Endothelial cell of umbilical vein (primary cell): ENCODE measurements at regions of chr4 and their contacts with region 1.

Region 1: GRCh38 chr4:87422104-87423052 is at the start of gene NUDT9:
- DNase-seq: peak; percentile 97
- H3K4me3 ChIP-seq: peak within 1 kb of the TSS; percentile 83 to 94 (median 90)
- H3K27ac ChIP-seq: peak within 1 kb of the TSS; percentile 68
- H3K4me1 ChIP-seq: peaks cover 11% of the 10 kb centered on the region
- H3K27me3 ChIP-seq: no peaks in the 10 kb centered on the region
- CTCF ChIP-seq: no peak
- POLR2A ChIP-seq: peak; percentile 79
- total RNA-seq, gene NUDT9: 25.0 and 26.0 TPM in 2 replicates

Region 2: GRCh38 chr4:86593688-86594558 is 828.5 kb before region 1 on chr4 and contains the start of gene PTPN13:
- CTCF ChIA-PET with region 1: no interaction called
- POLR2A ChIA-PET with region 1: no interaction called
- dilution Hi-C with region 1: no loop called
- intact Hi-C with region 1: loop called (anchors 10 kb)
- DNase-seq: peak; percentile 98
- H3K4me3 ChIP-seq: peak within 1 kb of the TSS; percentile 38 to 83 (median 70)
- H3K27ac ChIP-seq: no peak within 1 kb of the TSS
- H3K4me1 ChIP-seq: peaks cover 12% of the 10 kb centered on the region
- H3K27me3 ChIP-seq: no peaks in the 10 kb centered on the region
- CTCF ChIP-seq: no peak
- POLR2A ChIP-seq: peak; percentile 43
- total RNA-seq, gene PTPN13: 2.2 and 2.9 TPM in 2 replicates

Region 3: GRCh38 chr4:87390891-87391575 is 31.3 kb before region 1 on chr4 and contains the start of gene HSD17B11:
- CTCF ChIA-PET with region 1: interaction called, 11 read pairs
- POLR2A ChIA-PET with region 1: interaction called, 11 read pairs
- dilution Hi-C with region 1: no loop called
- intact Hi-C with region 1: loop called (anchors 1 kb)
- DNase-seq: peak; percentile 93
- H3K4me3 ChIP-seq: peak within 1 kb of the TSS; percentile 62 to 85 (median 65)
- H3K27ac ChIP-seq: peak within 1 kb of the TSS; percentile 47
- H3K4me1 ChIP-seq: peaks cover 9% of the 10 kb centered on the region
- H3K27me3 ChIP-seq: no peaks in the 10 kb centered on the region
- CTCF ChIP-seq: no peak
- POLR2A ChIP-seq: peak; percentile 85
- total RNA-seq, gene HSD17B11: 16.0 and 21.1 TPM in 2 replicates

Region 4: DNA sequence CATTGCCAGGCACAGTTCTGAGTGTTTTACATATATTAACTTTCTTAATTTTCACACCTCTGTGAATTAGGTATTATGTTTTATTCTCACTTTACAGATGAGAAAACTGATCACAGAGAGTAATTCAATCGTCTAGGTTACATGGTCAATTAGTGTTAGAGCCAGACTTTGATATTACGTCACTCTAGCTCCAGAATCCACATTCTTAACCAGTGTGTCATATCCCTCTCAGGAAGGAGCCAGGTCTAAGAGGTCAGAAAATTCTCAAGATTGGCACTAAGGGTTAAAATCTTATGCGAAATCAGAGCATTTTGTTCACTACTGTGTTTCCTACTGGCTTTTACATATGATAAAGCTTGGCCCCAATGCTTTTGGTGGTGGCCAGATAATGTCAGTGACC is 235.1 kb after region 1 on chr4:
- CTCF ChIA-PET with region 1: no interaction called
- POLR2A ChIA-PET with region 1: no interaction called
- dilution Hi-C with region 1: no loop called
- intact Hi-C with region 1: loop called (anchors 5 kb)
- DNase-seq: peak; percentile 91
- H3K4me3 ChIP-seq: no peak overlapping the region
- H3K27ac ChIP-seq: peak overlapping the region; percentile 93
- H3K4me1 ChIP-seq: peaks cover 32% of the 10 kb centered on the region
- H3K27me3 ChIP-seq: no peaks in the 10 kb centered on the region
- CTCF ChIP-seq: no peak
- POLR2A ChIP-seq: no peak

Region 5: DNA sequence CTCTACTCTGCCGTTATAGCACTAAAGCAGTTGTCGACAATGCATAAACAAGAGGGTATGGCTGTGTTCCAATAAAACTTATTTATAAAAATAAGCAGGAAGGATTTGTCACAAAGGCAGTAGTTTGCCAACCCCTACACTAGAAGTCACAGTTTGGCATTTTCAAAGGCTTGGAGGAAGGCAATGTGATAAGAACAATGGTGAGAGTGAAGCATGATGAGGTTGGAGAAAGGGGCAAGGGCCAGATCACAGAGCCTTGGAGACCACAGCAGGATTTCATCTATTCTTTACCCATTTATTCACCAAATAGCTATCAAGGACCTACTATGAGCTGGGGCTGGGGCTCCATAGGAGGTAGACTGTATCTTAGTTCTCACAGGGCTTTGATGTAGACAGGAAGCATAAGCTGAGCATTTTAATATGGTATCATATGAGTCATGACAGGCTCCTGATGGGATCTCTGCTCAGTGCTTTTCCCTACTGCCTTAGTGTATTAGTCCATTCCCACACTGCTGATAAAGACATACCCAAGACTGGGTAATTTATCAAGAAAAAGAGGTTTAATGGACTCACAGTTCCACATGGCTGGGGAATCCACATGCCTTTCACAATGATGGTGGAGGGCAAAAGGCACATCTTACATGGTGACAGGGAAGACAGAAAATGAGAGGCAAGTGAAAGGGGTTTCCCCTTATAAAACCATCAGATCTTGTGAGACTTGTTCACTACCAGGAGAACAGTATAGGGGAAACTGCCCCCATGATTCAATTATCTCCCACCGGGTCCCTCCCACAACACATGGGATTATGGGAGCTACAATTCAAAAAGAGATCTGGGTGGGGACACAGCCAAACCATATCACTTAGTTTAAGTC is 803.1 kb after region 1 on chr4:
- CTCF ChIA-PET with region 1: no interaction called
- POLR2A ChIA-PET with region 1: no interaction called
- dilution Hi-C with region 1: no loop called
- intact Hi-C with region 1: no loop called
- DNase-seq: peak; percentile 91
- H3K4me3 ChIP-seq: peak overlapping the region in 1 of 3 experiments; percentile 6
- H3K27ac ChIP-seq: peak overlapping the region; percentile 95
- H3K4me1 ChIP-seq: peaks cover 19% of the 10 kb centered on the region
- H3K27me3 ChIP-seq: no peaks in the 10 kb centered on the region
- CTCF ChIP-seq: no peak
- POLR2A ChIP-seq: no peak